ENCODE measurements at regions of chr16 and their contacts with region 1.

Region 1: GRCh38 chr16:11742539-11743307 is at the start of gene TXNDC11:
- DNase-seq: peak; percentile 100
- ATAC-seq: peak; percentile 92
- H3K4me3 Mint-ChIP-seq: peak within 1 kb of the TSS; percentile 88
- H3K27ac Mint-ChIP-seq: peak within 1 kb of the TSS; percentile 96
- H3K4me1 Mint-ChIP-seq: peaks cover 50% of the 10 kb centered on the region
- H3K27me3 Mint-ChIP-seq: no peaks in the 10 kb centered on the region
- total RNA-seq, gene TXNDC11: 27.3 to 28.3 TPM

Region 2: GRCh38 chr16:10743610-10744393 is 998.9 kb before region 1 on chr16 and contains the start of gene NUBP1:
- CTCF ChIA-PET with region 1: interaction called, 5 read pairs
- POLR2A ChIA-PET with region 1: no interaction called
- intact Hi-C with region 1: loop called in 1 of 2 experiments (anchors 2 kb)
- DNase-seq: peak; percentile 100
- ATAC-seq: peak; percentile 95
- H3K4me3 Mint-ChIP-seq: peak within 1 kb of the TSS; percentile 75
- H3K27ac Mint-ChIP-seq: peak within 1 kb of the TSS; percentile 98
- H3K4me1 Mint-ChIP-seq: peaks cover 30% of the 10 kb centered on the region
- H3K27me3 Mint-ChIP-seq: no peaks in the 10 kb centered on the region
- total RNA-seq, gene NUBP1: 25.9 to 33.1 TPM

Region 3: GRCh38 chr16:11651796-11652195 is 90.9 kb before region 1 on chr16:
- CTCF ChIA-PET with region 1: no interaction called
- POLR2A ChIA-PET with region 1: no interaction called
- intact Hi-C with region 1: no loop called
- DNase-seq: no peak
- ATAC-seq: no peak
- H3K4me3 Mint-ChIP-seq: no peak overlapping the region
- H3K27ac Mint-ChIP-seq: no peak overlapping the region
- H3K4me1 Mint-ChIP-seq: peaks cover 7% of the 10 kb centered on the region
- H3K27me3 Mint-ChIP-seq: no peaks in the 10 kb centered on the region

Region 4: DNA sequence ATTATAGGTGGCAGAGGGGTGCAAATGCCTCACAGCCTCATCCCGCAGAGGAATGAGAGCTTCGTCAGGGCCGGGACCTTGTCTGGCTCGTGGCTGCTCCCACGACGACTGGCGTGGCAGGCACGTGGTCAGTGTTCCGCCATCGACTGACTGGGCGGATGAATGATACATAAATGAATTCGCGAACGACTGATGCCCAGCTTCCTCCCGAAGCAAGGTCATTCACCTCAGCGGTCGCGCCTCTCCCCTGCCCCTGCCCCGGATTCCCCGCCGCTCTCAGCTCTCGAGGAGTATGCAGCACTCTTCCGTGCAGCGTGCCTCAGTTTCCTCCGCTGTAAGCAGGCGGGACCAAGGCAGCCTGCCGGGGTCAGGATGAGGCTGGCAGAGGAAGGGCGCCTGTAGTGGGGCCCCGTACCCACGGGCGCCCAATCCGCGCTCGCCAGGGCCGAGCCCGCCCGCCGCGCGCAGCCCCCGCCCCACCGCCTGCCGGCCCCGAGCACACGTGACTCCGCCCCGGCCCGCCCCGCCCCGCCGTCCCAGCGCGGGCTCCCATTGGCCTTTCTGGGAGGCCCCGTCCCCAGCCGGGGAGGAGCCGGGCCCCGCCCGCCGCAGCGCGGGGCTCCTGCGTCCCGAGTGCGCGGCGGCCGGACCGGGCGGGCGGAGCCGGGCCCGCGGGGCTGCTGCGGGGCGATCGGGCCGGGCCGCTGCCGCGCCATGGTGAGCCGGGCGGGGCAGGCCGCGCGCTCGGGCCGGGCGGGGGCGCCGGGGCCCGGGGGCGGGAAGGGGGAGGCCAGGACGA is 74.7 kb before region 1 on chr16 and contains the start of gene SNN:
- CTCF ChIA-PET with region 1: no interaction called
- POLR2A ChIA-PET with region 1: no interaction called
- intact Hi-C with region 1: loop called in 1 of 2 experiments (anchors 1 kb)
- DNase-seq: peak; percentile 93
- ATAC-seq: peak; percentile 90
- H3K4me3 Mint-ChIP-seq: peak within 1 kb of the TSS; percentile 72
- H3K27ac Mint-ChIP-seq: no peak within 1 kb of the TSS
- H3K4me1 Mint-ChIP-seq: peaks cover 73% of the 10 kb centered on the region
- H3K27me3 Mint-ChIP-seq: no peaks in the 10 kb centered on the region
- total RNA-seq, gene SNN: 6.0 to 7.2 TPM

Region 5: GRCh38 chr16:11783319-11784037 is 40.8 kb after region 1 on chr16:
- CTCF ChIA-PET with region 1: no interaction called
- POLR2A ChIA-PET with region 1: interaction called, 4 read pairs
- intact Hi-C with region 1: loop called (anchors 1 kb)
- DNase-seq: peak; percentile 65
- ATAC-seq: peak; percentile 80
- H3K4me3 Mint-ChIP-seq: peak overlapping the region; percentile 74
- H3K27ac Mint-ChIP-seq: peak overlapping the region; percentile 97
- H3K4me1 Mint-ChIP-seq: peaks cover 74% of the 10 kb centered on the region
- H3K27me3 Mint-ChIP-seq: no peaks in the 10 kb centered on the region

Region 6: GRCh38 chr16:11851294-11852091 is 108.8 kb after region 1 on chr16 and contains the start of gene RSL1D1:
- CTCF ChIA-PET with region 1: interaction called, 3 read pairs
- POLR2A ChIA-PET with region 1: interaction called, 4 read pairs
- intact Hi-C with region 1: loop called (anchors 1 to 5 kb)
- DNase-seq: peak; percentile 96
- ATAC-seq: peak; percentile 85
- H3K4me3 Mint-ChIP-seq: peak within 1 kb of the TSS; percentile 99
- H3K27ac Mint-ChIP-seq: peak within 1 kb of the TSS; percentile 96
- H3K4me1 Mint-ChIP-seq: peaks cover 52% of the 10 kb centered on the region
- H3K27me3 Mint-ChIP-seq: no peaks in the 10 kb centered on the region
- total RNA-seq, gene RSL1D1: 369 to 466 TPM

Region 7: DNA sequence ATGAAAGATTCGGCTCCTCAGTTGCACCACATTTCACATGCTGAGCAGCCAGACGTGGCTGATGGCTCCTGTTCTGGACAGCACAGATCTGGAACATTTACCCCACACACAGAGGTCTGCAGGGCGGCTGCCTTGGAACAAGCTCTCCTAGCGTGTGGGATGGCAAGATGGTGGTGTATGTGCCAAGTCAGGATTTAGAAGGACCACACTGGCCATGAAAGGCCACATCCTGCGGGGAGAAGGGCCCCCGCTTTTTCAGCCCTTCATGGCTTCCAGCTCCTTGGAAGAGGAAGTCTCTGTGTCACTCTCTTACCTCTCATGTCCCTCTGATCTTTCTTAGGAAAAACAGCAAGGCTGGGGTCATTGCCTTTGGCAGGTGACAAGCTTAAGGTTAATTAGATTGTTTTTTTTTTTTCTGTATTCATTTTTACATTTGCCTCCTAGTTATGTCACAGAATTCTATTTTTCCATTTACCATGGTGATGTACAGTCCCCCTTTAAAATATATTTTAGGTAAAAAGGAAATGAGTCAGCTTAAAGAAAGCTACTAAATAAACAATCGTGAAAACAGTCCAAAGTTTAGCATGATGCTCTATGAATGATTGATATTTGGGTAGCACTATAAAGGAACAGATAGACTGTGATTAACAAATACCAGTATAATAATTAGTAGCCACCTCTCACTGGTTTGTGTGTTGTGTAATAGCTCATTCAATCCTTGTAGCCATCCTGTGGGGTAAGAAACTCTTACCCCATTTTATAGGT is 664.4 kb after region 1 on chr16:
- CTCF ChIA-PET with region 1: no interaction called
- POLR2A ChIA-PET with region 1: interaction called, 10 read pairs
- intact Hi-C with region 1: no loop called
- DNase-seq: no peak
- ATAC-seq: no peak
- H3K4me3 Mint-ChIP-seq: no peak overlapping the region
- H3K27ac Mint-ChIP-seq: no peak overlapping the region
- H3K4me1 Mint-ChIP-seq: no peaks in the 10 kb centered on the region
- H3K27me3 Mint-ChIP-seq: no peaks in the 10 kb centered on the region